Activated CD4-positive, alpha-beta memory T cell treated with anti-CD3 and anti-CD28 coated beads, Interleukin-2, amount 10 ng/mL, durations not matched to agents 7 days and 5 days (primary cell): ENCODE measurements at regions of chr11 and their contacts with region 1.

Region 1: GRCh38 chr11:65779851-65780577 is 762 bp downstream of the AP5B1 start:
- DNase-seq: peak; percentile 88
- H3K4me3 Mint-ChIP-seq: peak overlapping the region; percentile 86
- H3K27ac Mint-ChIP-seq: peak overlapping the region; percentile 74
- H3K4me1 Mint-ChIP-seq: peaks cover 23% of the 10 kb centered on the region
- H3K27me3 Mint-ChIP-seq: peaks cover 17% of the 10 kb centered on the region

Region 2: GRCh38 chr11:65703846-65704245 is 76.2 kb before region 1 on chr11:
- CTCF ChIA-PET with region 1: interaction called, 15 read pairs
- POLR2A ChIA-PET with region 1: no interaction called
- DNase-seq: no peak
- H3K4me3 Mint-ChIP-seq: no peak overlapping the region
- H3K27ac Mint-ChIP-seq: no peak overlapping the region
- H3K4me1 Mint-ChIP-seq: peaks cover 12% of the 10 kb centered on the region
- H3K27me3 Mint-ChIP-seq: peaks cover 20% of the 10 kb centered on the region

Region 3: GRCh38 chr11:65720237-65720934 is 59.6 kb before region 1 on chr11 and contains the start of gene RNASEH2C:
- CTCF ChIA-PET with region 1: interaction called, 24 read pairs
- POLR2A ChIA-PET with region 1: interaction called, 11 read pairs
- DNase-seq: peak; percentile 84
- H3K4me3 Mint-ChIP-seq: peak within 1 kb of the TSS; percentile 93
- H3K27ac Mint-ChIP-seq: peak within 1 kb of the TSS; percentile 77
- H3K4me1 Mint-ChIP-seq: peaks cover 40% of the 10 kb centered on the region
- H3K27me3 Mint-ChIP-seq: peaks cover 2% of the 10 kb centered on the region
- total RNA-seq, gene RNASEH2C: 80.3 to 81.9 TPM

Region 4: DNA sequence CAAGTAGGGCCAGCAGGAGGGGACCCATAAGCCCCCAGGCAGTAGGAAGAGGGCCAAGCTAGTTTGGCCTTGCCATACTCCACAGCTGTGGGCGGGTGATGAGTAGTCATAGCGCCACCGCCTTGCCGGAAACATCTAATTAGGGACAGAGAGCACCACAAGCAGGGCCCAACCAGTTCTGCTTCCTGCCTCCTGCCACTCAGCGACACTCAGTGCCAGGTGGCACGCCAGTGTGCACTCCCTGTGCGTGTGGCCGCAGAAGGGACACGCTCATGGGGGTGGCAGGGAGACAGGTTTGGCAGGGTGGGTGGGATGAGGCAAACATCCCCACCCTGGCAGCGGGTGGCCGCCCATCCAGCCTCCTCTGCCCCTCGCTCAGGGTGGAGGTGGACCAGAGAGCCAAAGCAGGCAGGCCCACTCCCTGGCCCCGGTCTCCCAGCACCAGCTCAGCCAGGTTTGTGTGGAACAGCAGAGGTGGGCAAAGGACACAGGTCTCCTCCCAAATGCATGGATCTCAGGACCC is 11.7 kb after region 1 on chr11:
- CTCF ChIA-PET with region 1: interaction called, 43 read pairs
- POLR2A ChIA-PET with region 1: interaction called, 25 read pairs
- DNase-seq: peak; percentile 80
- H3K4me3 Mint-ChIP-seq: no peak overlapping the region
- H3K27ac Mint-ChIP-seq: peak overlapping the region; percentile 69
- H3K4me1 Mint-ChIP-seq: peaks cover 37% of the 10 kb centered on the region
- H3K27me3 Mint-ChIP-seq: peaks cover 28% of the 10 kb centered on the region

Region 5: GRCh38 chr11:65810046-65810868 is 30.2 kb after region 1 on chr11:
- CTCF ChIA-PET with region 1: interaction called, 126 read pairs
- POLR2A ChIA-PET with region 1: interaction called, 6 read pairs
- DNase-seq: no peak
- H3K4me3 Mint-ChIP-seq: no peak overlapping the region
- H3K27ac Mint-ChIP-seq: no peak overlapping the region
- H3K4me1 Mint-ChIP-seq: no peaks in the 10 kb centered on the region
- H3K27me3 Mint-ChIP-seq: peaks cover 30% of the 10 kb centered on the region

Region 6: GRCh38 chr11:65826962-65827735 is 47.1 kb after region 1 on chr11:
- CTCF ChIA-PET with region 1: interaction called, 126 read pairs
- POLR2A ChIA-PET with region 1: interaction called, 4 read pairs
- DNase-seq: no peak
- H3K4me3 Mint-ChIP-seq: no peak overlapping the region
- H3K27ac Mint-ChIP-seq: no peak overlapping the region
- H3K4me1 Mint-ChIP-seq: peaks cover 25% of the 10 kb centered on the region
- H3K27me3 Mint-ChIP-seq: peaks cover 17% of the 10 kb centered on the region